ENCODE measurements at regions of chr2 and their contacts with region 1.

Region 1: GRCh38 chr2:136327162-136327852 is 209.4 kb upstream of the CXCR4 start:
- DNase-seq: peak; percentile 69
- H3K4me3 Mint-ChIP-seq: peak overlapping the region; percentile 43
- H3K27ac Mint-ChIP-seq: peak overlapping the region; percentile 91
- H3K4me1 Mint-ChIP-seq: peaks cover 68% of the 10 kb centered on the region
- H3K27me3 Mint-ChIP-seq: peaks cover 4% of the 10 kb centered on the region

Region 2: DNA sequence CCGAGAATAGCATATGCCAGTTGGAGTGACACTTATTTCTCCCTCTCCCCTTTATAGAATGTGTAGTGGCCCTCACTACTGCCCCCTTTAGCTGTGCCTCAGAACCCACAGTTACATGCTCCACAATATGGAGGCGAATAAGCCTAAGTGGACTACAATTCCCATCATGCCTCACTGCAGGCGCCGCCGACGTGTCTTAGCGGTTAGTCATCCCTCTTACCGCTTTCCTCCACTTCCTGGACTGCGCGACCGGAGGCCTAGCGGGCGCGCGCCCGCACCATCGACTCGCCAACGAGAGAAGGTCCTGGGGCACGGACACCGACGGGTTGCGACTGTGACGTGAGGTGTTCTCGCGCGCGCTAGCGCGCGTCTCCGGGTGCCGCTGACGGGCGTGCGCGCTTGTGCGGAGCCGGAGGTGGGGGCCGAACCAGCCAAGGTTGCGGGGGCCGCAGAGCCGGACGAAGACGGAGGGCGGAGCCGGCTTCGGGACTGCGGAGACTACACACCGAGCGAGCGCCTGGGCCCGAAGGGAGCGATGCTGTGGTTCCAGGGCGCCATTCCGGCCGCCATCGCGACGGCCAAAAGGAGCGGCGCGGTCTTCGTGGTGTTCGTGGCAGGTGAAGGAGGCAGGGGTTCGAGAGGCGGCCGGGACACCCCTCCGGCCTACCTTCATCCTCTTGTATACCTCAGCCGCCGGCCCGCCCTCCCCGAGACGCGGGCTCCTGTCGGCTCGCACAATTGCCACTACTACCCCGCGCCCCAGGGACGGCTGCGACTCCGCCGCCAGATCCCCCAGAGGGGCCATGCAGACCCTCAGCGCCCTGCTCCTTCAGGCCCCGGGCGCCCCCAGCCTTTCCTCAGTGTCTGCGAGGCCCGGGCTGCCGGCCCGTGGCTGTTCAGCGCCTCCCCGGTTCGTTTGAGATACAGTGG is 585.6 kb before region 1 on chr2 and contains the start of gene UBXN4:
- intact Hi-C with region 1: loop called (anchors 10 kb)
- DNase-seq: peak; percentile 89
- H3K4me3 Mint-ChIP-seq: peak within 1 kb of the TSS; percentile 99
- H3K27ac Mint-ChIP-seq: peak within 1 kb of the TSS; percentile 100
- H3K4me1 Mint-ChIP-seq: peaks cover 36% of the 10 kb centered on the region
- H3K27me3 Mint-ChIP-seq: no peaks in the 10 kb centered on the region
- total RNA-seq, gene UBXN4: 115 and 121 TPM in 2 replicates

Region 3: GRCh38 chr2:135913727-135914365 is 413.5 kb before region 1 on chr2:
- intact Hi-C with region 1: loop called (anchors 1 kb)
- DNase-seq: no peak
- H3K4me3 Mint-ChIP-seq: no peak overlapping the region
- H3K27ac Mint-ChIP-seq: no peak overlapping the region
- H3K4me1 Mint-ChIP-seq: peaks cover 27% of the 10 kb centered on the region
- H3K27me3 Mint-ChIP-seq: no peaks in the 10 kb centered on the region

Region 4: DNA sequence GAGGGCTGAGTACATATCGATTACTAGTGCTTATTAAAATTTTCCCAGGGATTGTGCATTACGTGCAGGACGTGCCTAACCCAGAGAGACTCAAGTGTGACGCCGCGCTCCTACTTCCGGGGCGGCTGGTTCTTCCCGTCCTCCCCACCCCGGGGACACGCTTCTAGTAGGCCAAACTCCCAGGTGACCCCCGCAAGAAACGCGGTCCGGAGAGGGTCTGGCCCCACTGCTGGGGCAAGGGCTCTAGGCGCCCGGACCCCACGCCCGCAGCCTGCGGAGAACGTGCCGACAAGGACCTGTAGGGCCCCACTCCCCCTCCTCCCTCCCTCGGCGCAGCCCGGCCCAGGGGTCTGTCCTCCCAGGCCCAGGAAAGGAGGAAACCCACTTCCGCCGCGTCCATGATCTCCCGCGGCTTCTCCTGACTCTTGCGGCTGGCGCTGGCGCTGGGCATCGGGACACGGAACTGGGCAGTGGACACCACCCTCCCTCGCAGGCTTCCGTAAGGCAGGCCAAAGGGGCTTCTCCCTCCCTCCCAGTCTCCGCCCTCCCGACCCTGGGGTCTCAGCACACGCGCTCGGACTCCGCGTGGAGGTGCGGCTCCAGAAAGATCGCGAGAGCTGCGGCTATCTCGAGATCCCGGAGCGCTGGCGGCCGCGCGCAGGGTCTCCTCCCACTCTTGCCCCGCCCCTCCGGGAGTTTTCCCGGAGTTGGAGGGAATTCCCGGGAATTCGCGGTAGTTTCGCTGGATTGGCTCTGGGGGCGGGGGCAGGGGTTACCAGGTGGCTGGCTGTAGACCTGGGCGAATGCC is 342.1 kb before region 1 on chr2 and contains the start of gene DARS1:
- intact Hi-C with region 1: loop called (anchors 1 kb)
- DNase-seq: peak; percentile 78
- H3K4me3 Mint-ChIP-seq: peak within 1 kb of the TSS; percentile 91
- H3K27ac Mint-ChIP-seq: peak within 1 kb of the TSS; percentile 97
- H3K4me1 Mint-ChIP-seq: peaks cover 62% of the 10 kb centered on the region
- H3K27me3 Mint-ChIP-seq: no peaks in the 10 kb centered on the region
- total RNA-seq, gene DARS1: 132 and 140 TPM in 2 replicates

Region 5: GRCh38 chr2:136238286-136239078 is 88.8 kb before region 1 on chr2:
- intact Hi-C with region 1: loop called (anchors 1 kb)
- DNase-seq: peak; percentile 12
- H3K4me3 Mint-ChIP-seq: peak overlapping the region; percentile 27
- H3K27ac Mint-ChIP-seq: peak overlapping the region; percentile 88
- H3K4me1 Mint-ChIP-seq: peaks cover 49% of the 10 kb centered on the region
- H3K27me3 Mint-ChIP-seq: no peaks in the 10 kb centered on the region

Region 6: GRCh38 chr2:136362676-136363390 is 35.5 kb after region 1 on chr2:
- intact Hi-C with region 1: loop called (anchors 1 kb)
- DNase-seq: no peak
- H3K4me3 Mint-ChIP-seq: peak overlapping the region; percentile 21
- H3K27ac Mint-ChIP-seq: peak overlapping the region; percentile 69
- H3K4me1 Mint-ChIP-seq: peaks cover 57% of the 10 kb centered on the region
- H3K27me3 Mint-ChIP-seq: peaks cover 4% of the 10 kb centered on the region